ENCODE measurements at regions of chr1 and their contacts with region 1.

Region 1: DNA sequence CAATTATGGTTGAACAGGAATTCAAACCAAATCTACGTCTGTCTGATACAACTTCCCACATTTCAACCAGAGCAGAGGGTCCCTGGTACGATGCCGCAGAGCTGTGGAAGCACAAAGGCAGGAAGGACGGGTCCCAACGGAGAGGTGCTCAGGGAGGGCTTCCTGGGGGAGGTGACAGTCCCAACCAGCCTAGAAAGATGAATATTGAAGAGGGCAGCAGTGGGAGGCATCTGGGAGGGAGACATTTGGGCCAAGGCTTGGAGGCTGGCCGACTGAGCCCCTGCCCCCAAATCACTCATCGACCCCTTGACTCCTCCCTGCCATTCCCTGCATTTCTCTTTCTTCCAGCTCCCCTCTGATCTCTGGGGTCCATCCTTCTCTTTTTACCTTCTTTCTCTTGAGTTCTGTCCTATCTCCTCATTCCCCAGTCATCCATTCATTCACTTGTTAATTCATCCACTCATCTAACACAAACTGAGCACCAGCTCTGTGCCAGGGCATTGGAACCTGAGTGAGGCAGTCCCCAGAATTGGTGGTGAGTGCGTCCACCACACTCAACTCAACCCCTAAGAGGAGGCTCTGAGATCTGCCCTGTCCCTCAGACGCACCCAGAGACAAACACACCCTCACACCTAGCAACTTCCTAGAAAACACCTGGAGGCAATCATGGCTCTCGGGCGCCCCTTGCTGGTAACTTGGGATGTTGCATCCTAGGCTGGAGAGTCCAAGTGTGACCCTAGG is 13.2 kb upstream of the CELA3B start:
- DNase-seq: peak; percentile 41 to 61
- ATAC-seq: peak; percentile 88 to 96
- H3K4me3 ChIP-seq: no peak overlapping the region
- H3K27ac ChIP-seq: no peak overlapping the region
- H3K4me1 ChIP-seq: no peaks in the 10 kb centered on the region
- H3K27me3 ChIP-seq: no peaks in the 10 kb centered on the region
- CTCF ChIP-seq: peak; percentile 86 to 93 (median 88)
- POLR2A ChIP-seq: no peak

Region 2: DNA sequence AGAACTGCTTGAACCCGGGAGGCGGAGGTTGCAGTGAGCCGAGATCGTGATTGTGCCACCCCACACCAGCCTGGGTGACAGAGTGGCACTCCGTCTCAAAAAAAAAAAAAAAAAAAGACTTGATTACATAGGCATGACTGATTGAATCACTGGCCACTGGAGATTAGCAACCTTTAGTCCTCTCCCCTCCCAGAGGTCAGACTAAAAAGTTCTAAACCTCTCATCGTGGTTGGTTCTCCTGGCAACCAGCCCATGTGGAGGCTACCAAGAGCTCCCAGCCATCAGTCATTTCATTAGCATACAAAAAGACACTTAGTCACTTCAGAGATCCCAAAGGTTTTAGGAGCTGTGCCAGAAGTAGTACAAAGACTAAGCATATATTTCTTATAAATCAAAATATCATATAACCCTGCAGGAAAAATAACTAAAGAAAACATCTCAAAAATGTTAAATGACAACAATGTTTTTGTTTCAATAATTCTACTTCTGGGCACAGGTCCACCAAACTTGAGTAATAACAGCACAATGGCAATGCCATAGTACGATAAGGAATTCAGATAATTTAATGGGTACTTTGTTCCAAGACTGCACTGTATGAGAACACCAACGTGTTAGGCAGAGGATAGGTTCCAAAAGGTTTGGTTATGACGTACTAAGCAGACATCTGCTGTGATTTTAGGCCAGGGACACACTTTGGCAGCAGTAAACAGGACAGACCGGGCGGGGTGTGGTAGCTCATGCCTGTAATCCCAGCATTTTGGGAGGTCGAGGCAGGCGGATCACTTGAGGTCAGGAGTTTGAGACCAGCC is 198.8 kb before region 1 on chr1:
- in situ Hi-C with region 1: loop called in 1 of 4 experiments (anchors 25 kb)
- intact Hi-C with region 1: no loop called
- DNase-seq: peak in 1 of 2 donors; percentile 19
- ATAC-seq: peak; percentile 36 to 49
- H3K4me3 ChIP-seq: no peak overlapping the region
- H3K27ac ChIP-seq: peak overlapping the region in 3 of 4 donors; percentile 34 to 48 (median 42)
- H3K4me1 ChIP-seq: peaks cover 29 to 37% of the 10 kb centered on the region in 2 donors
- H3K27me3 ChIP-seq: no peaks in the 10 kb centered on the region
- CTCF ChIP-seq: no peak
- POLR2A ChIP-seq: no peak

Region 3: DNA sequence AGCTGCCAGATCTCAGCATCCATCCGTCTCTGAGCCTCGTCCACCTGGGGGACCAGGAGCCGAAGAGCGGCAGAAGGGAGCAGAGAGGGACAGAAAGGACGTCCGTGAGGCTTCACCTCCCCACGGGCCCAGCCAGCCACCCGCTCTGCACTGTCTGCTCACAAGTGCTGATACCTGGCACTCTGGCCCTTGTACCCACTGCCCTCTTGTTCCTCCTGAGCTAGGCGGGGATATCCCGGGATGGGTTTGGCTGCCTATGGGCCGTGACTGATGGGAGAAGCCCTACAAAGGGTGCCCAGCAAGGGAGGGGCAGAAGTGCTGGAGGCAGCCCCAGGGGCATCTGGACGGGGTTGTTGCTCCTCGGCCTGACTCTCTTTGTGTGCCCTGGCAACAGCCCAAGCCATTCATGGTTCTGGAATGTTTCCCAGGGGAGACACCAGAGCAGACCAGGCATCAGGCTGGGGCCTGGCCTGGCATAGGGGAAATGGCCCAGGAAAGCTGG is 94.0 kb before region 1 on chr1:
- in situ Hi-C with region 1: loop called in 3 of 4 experiments (anchors 10 to 25 kb)
- intact Hi-C with region 1: loop called (anchors 5 kb)
- DNase-seq: peak; percentile 43 to 79
- ATAC-seq: peak; percentile 67 to 69
- H3K4me3 ChIP-seq: no peak overlapping the region
- H3K27ac ChIP-seq: peak overlapping the region; percentile 10 to 54 (median 28)
- H3K4me1 ChIP-seq: peaks cover 9% of the 10 kb centered on the region in 2 donors
- H3K27me3 ChIP-seq: no peaks in the 10 kb centered on the region
- CTCF ChIP-seq: no peak
- POLR2A ChIP-seq: no peak

Region 4: GRCh38 chr1:21896652-21897532 is 66.8 kb before region 1 on chr1:
- in situ Hi-C with region 1: loop called in 1 of 4 experiments (anchors 10 kb)
- intact Hi-C with region 1: loop called (anchors 5 kb)
- DNase-seq: peak; percentile 86 to 91
- ATAC-seq: peak; percentile 85 to 86
- H3K4me3 ChIP-seq: peak overlapping the region in 1 of 4 donors; percentile 15
- H3K27ac ChIP-seq: peak overlapping the region; percentile 59 to 91 (median 88)
- H3K4me1 ChIP-seq: peaks cover 70 to 82% of the 10 kb centered on the region in 2 donors
- H3K27me3 ChIP-seq: no peaks in the 10 kb centered on the region
- CTCF ChIP-seq: no peak
- POLR2A ChIP-seq: no peak

Measured in gastrocnemius medialis (tissue), 4 donors.